Ovary (tissue), 10 donors: ENCODE measurements at regions of chr4 and their contacts with region 1.

Region 1: DNA sequence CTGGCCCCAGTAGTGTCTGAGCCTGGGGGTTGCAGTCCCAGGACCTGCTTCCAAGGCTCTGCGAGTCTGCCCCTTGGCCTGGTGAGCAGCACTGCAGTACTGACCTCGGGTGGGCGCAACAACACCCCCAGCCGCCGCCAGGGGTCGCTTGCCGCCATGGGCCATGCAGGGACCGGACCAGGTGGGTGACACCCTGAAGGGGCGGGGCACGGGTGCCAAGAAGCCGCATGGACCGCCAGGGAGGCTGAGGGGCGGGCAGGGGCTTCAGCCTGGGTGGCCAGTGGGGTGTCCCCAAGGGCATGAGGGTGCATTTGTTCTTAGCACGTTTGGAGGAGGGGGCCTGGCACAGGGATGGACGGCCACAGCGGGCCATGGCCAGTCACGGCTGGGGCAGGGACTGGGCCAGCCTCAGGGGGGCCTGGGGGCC is 25.0 kb downstream of the TACC3 start:
- DNase-seq: peak; percentile 55 to 77 (median 63)
- H3K4me3 ChIP-seq: no peak overlapping the region
- H3K27ac ChIP-seq: no peak overlapping the region
- H3K4me1 ChIP-seq: peaks cover 2% of the 10 kb centered on the region
- H3K27me3 ChIP-seq: no peaks in the 10 kb centered on the region
- CTCF ChIP-seq: peak in 2 of 3 donors; percentile 65 to 67
- EP300 ChIP-seq: no peak
- POLR2A ChIP-seq: no peak

Region 2: DNA sequence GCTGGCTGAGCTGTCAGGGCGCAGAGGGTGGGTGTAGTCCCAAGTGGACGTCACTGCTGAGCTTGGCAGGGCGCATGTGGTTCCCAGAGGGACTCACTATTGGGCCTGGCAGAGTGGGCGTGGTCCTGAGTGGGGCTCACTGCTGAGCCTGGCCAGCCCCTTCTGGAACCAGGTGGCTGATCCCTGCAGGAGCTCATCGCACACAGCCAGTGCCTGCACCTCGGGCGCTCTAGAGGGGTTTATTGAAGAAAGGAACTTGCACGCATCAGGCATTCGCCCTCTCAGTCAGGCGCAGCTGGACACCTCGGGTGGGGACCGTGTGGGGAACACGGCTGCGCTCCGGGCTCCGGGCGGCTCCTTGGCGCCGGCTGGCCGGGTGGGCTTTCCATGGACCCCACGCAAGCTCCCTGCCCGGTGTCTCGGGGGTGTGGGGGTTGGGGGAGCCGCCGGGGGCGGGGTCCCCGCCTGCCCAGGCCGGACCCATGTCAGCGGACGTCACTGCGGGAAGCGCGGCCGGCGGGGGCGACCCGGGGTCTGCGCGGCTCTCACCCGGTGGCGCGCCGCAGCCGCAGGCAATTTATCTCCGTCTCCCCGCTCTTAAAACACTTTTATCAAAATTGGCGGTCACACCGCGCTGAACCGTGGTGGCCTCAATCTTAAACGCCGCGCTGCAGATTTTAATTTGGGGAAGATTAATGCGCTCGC is 274.7 kb before region 1 on chr4:
- intact Hi-C with region 1: no loop called
- DNase-seq: peak in 2 of 5 donors; percentile 3 to 24
- H3K4me3 ChIP-seq: no peak overlapping the region
- H3K27ac ChIP-seq: no peak overlapping the region
- H3K4me1 ChIP-seq: no peaks in the 10 kb centered on the region
- H3K27me3 ChIP-seq: no peaks in the 10 kb centered on the region
- CTCF ChIP-seq: no peak
- EP300 ChIP-seq: no peak
- POLR2A ChIP-seq: no peak

Region 3: GRCh38 chr4:1809754-1810511 is 63.7 kb after region 1 on chr4:
- intact Hi-C with region 1: loop called in 1 of 4 experiments (anchors 5 kb)
- DNase-seq: peak in 4 of 5 donors; percentile 40 to 67 (median 52)
- H3K4me3 ChIP-seq: no peak overlapping the region
- H3K27ac ChIP-seq: no peak overlapping the region
- H3K4me1 ChIP-seq: no peaks in the 10 kb centered on the region
- H3K27me3 ChIP-seq: no peaks in the 10 kb centered on the region
- CTCF ChIP-seq: peak in 1 of 3 donors; percentile 15
- EP300 ChIP-seq: no peak
- POLR2A ChIP-seq: no peak

Region 4: DNA sequence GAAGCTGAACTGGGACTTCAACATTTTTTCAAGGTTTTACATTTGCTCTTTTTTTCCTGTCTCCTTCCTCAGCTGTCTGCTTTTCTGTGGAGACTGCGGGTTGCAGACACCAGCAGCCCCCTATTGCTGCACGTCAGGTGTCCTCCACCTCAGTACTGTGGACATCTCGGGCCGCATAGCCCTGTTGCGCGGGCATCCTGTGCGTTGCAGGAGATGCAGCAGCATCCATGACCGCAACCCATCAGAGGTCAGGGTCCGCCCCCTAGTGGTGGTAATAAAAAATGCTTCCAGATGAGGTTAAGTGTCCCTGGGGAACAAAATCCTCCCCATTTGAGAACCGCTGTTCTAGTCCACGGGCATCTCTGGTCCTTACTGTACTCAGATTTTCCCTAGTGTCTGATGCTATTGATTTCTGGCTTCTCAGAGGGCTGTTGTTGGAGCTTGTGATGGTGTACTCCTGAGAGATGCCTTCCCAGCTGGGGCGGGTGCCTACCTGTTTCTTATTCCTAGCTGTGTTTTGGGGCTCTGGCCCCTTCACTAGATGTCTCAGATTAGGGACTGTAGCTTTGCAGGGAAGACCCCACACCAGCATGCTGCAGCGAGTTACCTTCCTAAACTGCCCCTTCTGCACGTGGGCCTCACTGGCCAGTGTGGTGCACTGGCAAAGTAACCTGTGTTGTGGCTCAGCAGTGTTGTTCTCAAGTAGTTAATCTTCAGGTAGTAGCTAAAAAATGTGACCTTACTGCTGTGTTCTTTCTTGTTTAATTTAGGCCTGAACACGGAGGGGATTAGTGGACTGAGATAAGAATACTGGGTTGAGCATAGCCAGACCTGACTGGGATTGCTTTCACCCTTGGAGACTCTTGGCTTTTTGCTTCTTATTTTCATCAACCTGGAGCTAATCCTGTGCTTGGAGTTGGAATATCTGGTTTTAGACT is 153.1 kb after region 1 on chr4:
- intact Hi-C with region 1: loop called (anchors 5 kb)
- DNase-seq: peak; percentile 50 to 72 (median 65)
- H3K4me3 ChIP-seq: no peak overlapping the region
- H3K27ac ChIP-seq: no peak overlapping the region
- H3K4me1 ChIP-seq: peaks cover 1% of the 10 kb centered on the region
- H3K27me3 ChIP-seq: no peaks in the 10 kb centered on the region
- CTCF ChIP-seq: peak; percentile 78 to 79 (median 78)
- EP300 ChIP-seq: no peak
- POLR2A ChIP-seq: no peak